Heart left ventricle (tissue), 16 donors: ENCODE measurements at regions of chr2 and their contacts with region 1.

Region 1: DNA sequence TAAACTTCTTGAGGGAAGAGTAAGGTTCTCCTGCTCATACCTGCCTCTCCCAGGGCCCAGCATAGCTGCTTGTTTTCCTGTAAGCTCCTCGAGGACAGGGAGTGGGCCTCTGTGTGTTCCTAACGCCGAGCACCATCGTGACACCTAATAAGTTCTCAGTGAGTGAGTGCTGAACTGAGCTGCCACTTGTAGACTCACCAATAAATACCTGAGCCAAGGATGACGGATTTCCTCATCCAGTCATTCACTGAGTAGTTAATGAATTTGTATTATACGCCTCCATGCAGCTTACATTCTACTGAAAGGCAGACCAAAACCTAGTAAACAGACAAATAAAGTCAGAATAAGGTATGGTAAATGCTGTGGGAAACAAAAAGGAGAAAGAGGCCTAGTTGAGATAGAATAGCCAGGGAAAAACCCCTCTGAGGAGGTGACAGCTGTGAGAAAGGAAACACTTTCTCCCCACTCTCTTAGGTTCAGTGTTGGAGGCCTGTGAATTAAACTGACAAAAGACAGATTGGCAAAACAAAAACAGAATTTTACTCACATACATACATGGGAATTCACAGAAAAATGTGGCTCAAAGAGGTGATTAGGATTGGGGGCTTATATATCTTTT is 138.6 kb downstream of the B3GNT2 start:
- DNase-seq: no peak
- ATAC-seq: no peak
- H3K4me3 ChIP-seq: no peak overlapping the region
- H3K27ac ChIP-seq: no peak overlapping the region
- H3K4me1 ChIP-seq: peaks cover 0 to 5% (median 0%) of the 10 kb centered on the region in 12 donors
- H3K27me3 ChIP-seq: no peaks in the 10 kb centered on the region
- CTCF ChIP-seq: no peak
- POLR2A ChIP-seq: no peak

Region 2: GRCh38 chr2:61993444-61994024 is 341.0 kb before region 1 on chr2:
- intact Hi-C with region 1: loop called in 1 of 10 experiments (anchors 5 kb)
- DNase-seq: peak in 1 of 5 donors; percentile 19
- ATAC-seq: peak in 3 of 4 donors; percentile 67 to 83 (median 75)
- H3K4me3 ChIP-seq: no peak overlapping the region
- H3K27ac ChIP-seq: no peak overlapping the region
- H3K4me1 ChIP-seq: peaks cover 0 to 25% (median 3%) of the 10 kb centered on the region in 12 donors
- H3K27me3 ChIP-seq: no peaks in the 10 kb centered on the region
- CTCF ChIP-seq: peak; percentile 55 to 86 (median 69)
- POLR2A ChIP-seq: no peak

Region 3: DNA sequence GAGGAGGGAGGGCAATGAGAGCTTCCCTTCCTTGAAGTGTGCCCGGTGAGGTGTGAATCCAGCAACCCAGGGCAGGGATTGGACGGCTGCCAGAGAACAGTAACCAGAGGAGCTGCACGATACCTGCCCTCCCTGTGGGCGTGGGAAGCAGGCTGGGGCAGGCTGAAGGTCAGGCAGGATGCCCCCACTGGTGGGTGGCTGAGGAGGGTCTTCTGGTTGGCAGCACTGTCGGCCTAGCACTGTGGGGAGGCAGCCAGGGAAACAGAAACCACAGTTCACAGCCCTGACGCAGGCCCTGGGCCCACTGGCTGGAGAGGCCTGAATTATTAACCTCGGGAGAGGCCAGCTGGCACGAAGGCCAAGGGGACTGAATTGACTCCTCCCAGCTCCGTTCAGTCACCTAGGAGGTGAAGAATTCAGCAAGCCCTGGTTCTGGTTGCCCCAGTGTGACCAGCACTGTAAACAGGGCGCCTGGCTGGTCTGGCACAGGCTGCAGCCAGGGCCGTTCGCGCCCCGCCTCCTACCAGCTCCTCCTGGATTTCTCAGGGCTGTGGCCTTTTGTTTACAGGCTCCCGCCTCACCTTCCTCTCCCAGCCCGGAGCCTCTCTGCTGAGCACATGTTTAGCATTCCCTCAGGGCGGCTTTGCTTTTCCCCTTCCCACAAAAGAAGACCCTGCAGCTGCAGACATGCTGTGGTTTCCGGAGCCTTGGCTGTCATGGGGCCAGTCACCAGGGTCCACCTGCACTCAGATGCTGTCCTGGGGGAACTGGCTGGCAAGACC is 40.9 kb before region 1 on chr2:
- intact Hi-C with region 1: loop called in 1 of 10 experiments (anchors 5 kb)
- DNase-seq: peak; percentile 45 to 73 (median 60)
- ATAC-seq: peak; percentile 53 to 84 (median 80)
- H3K4me3 ChIP-seq: peak overlapping the region in 1 of 12 donors; percentile 12
- H3K27ac ChIP-seq: peak overlapping the region in 11 of 12 donors; percentile 17 to 76 (median 54)
- H3K4me1 ChIP-seq: peaks cover 5 to 52% (median 33%) of the 10 kb centered on the region in 12 donors
- H3K27me3 ChIP-seq: no peaks in the 10 kb centered on the region
- CTCF ChIP-seq: no peak
- POLR2A ChIP-seq: no peak